OCI-LY7 (cell line): ENCODE measurements at regions of chr14 and their contacts with region 1.

Region 1: DNA sequence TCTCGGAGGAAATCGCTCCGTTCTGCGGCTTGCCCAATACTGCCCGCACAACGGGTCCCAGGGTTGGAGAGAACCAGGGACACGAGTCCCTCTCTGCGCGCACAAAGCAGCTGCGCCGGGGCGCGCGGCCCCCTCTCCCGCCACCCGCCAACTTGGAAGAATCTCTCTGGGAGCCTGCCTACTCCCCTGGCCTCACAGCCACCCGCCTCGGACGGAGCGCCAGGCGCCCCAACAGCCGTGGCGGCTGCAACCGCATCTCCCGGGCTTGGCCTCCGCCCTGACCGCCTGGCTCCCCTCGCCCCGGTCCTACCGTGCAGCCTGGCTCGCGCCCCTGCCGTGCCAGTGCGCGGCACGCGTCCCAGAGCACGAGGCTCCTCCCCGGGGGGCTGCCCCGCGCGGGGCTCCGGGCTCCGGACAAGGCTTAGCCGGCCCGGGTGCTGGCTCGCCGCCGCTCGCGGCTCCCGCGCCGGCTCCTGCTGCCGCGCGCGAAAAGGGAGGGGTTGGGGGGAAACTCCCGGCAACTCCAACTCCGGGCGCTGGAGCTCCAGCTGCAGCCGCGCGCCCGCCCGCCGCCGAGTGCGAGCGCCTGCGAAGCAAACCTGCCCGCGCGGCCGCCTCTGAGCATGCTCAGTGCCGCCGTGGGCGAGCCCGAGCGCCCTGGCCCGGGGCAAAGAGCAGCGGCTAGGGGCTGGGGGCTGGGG is at the start of gene STXBP6:
- DNase-seq: no peak
- H3K4me3 ChIP-seq: no peak within 1 kb of the TSS
- H3K27ac ChIP-seq: no peak within 1 kb of the TSS
- H3K4me1 ChIP-seq: no peaks in the 10 kb centered on the region
- CTCF ChIP-seq: no peak
- total RNA-seq, gene STXBP6: not detected in 2 replicates

Region 2: GRCh38 chr14:24817212-24818057 is 232.3 kb before region 1 on chr14:
- CTCF ChIA-PET with region 1: no interaction called
- POLR2A ChIA-PET with region 1: no interaction called
- intact Hi-C with region 1: no loop called
- DNase-seq: no peak
- H3K4me3 ChIP-seq: no peak overlapping the region
- H3K27ac ChIP-seq: no peak overlapping the region
- H3K4me1 ChIP-seq: no peaks in the 10 kb centered on the region
- CTCF ChIP-seq: no peak

Region 3: DNA sequence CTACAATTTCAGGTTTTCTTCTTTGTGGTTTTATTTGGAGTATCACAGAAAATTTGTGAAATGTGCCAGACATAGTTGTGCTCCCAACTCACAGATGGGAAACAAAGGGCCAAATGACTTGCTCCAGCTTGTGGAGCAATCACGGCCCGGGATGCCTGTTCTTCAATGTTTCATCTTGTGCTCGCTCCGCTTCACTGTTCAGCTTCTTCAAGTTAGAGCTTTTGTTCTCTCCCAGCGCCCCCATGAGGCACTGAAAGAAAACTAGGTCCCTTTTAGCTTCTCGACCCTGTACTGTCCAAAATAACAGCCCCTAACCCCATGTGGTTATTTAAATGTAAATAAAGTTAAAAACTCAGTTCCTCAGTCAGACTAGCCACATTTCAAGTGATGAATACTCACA is 188.1 kb after region 1 on chr14:
- CTCF ChIA-PET with region 1: interaction called, 10 read pairs
- POLR2A ChIA-PET with region 1: no interaction called
- intact Hi-C with region 1: no loop called
- DNase-seq: peak; percentile 8
- H3K4me3 ChIP-seq: no peak overlapping the region
- H3K27ac ChIP-seq: no peak overlapping the region
- H3K4me1 ChIP-seq: no peaks in the 10 kb centered on the region
- CTCF ChIP-seq: peak; percentile 57